ENCODE measurements at regions of chr9 and their contacts with region 1.

Region 1: GRCh38 chr9:85425153-85425611 is 316.6 kb downstream of the AGTPBP1 start:
- DNase-seq: peak; percentile 84
- H3K4me3 ChIP-seq: no peak overlapping the region
- H3K27ac ChIP-seq: no peak overlapping the region
- H3K4me1 ChIP-seq: peaks cover 26% of the 10 kb centered on the region
- H3K27me3 ChIP-seq: no peaks in the 10 kb centered on the region
- CTCF ChIP-seq: peak; percentile 74 to 78
- POLR2A ChIP-seq: no peak

Region 2: GRCh38 chr9:84773022-84773421 is 652.2 kb before region 1 on chr9:
- CTCF ChIA-PET with region 1: no interaction called
- POLR2A ChIA-PET with region 1: no interaction called
- dilution Hi-C with region 1: no loop called
- intact Hi-C with region 1: loop called (anchors 10 kb)
- DNase-seq: peak; percentile 33
- H3K4me3 ChIP-seq: no peak overlapping the region
- H3K27ac ChIP-seq: no peak overlapping the region
- H3K4me1 ChIP-seq: peaks cover 8% of the 10 kb centered on the region
- H3K27me3 ChIP-seq: no peaks in the 10 kb centered on the region
- CTCF ChIP-seq: no peak
- POLR2A ChIP-seq: no peak

Region 3: DNA sequence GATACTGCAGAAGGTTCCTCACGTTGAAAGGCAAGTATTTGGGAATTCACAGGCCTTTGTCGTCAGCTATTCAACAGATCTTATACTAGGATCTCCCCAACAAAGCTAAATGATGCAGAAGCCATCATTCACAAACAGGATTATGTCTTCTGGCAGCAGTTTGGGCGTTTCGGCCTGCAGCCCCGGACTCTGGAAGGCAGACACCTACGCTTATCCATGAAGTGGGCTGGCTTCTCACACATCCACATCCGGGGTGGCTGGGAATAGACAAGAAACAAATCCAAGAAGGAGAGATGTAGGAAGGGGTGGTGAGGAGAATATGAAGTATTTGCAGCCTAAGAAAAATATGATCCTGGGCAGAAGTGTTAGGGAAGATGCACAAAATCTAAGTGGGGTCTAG is 155.4 kb before region 1 on chr9:
- CTCF ChIA-PET with region 1: no interaction called
- POLR2A ChIA-PET with region 1: no interaction called
- dilution Hi-C with region 1: no loop called
- intact Hi-C with region 1: no loop called
- DNase-seq: no peak
- H3K4me3 ChIP-seq: no peak overlapping the region
- H3K27ac ChIP-seq: no peak overlapping the region
- H3K4me1 ChIP-seq: no peaks in the 10 kb centered on the region
- H3K27me3 ChIP-seq: peaks cover under 1 to 7% of the 10 kb centered on the region in 2 experiments
- CTCF ChIP-seq: no peak
- POLR2A ChIP-seq: no peak

Region 4: DNA sequence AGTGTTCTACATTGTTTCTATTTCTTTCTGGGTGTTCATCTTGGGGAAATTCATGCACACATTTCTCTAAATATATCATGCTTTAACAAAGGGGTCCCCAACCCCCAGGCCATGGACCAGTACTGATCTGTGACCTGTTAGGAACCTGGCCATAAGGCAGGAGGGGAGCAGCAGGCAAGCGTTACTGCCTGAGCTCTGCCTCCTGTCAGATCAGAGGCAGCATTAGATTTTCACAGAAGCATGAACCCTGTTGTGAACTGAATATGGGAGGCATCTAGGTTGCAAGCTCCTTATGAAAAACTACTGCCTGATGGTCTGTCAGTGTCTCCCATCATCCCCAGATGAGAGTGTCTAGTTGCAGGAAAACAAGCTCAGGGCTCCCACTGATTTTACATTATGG is 46.6 kb after region 1 on chr9:
- CTCF ChIA-PET with region 1: no interaction called
- POLR2A ChIA-PET with region 1: no interaction called
- dilution Hi-C with region 1: no loop called
- intact Hi-C with region 1: no loop called
- DNase-seq: no peak
- H3K4me3 ChIP-seq: no peak overlapping the region
- H3K27ac ChIP-seq: no peak overlapping the region
- H3K4me1 ChIP-seq: no peaks in the 10 kb centered on the region
- H3K27me3 ChIP-seq: no peaks in the 10 kb centered on the region
- CTCF ChIP-seq: no peak
- POLR2A ChIP-seq: no peak

Region 5: GRCh38 chr9:85527331-85528020 is 102.3 kb after region 1 on chr9:
- CTCF ChIA-PET with region 1: no interaction called
- POLR2A ChIA-PET with region 1: no interaction called
- dilution Hi-C with region 1: no loop called
- intact Hi-C with region 1: loop called (anchors 2 kb)
- DNase-seq: peak; percentile 88
- H3K4me3 ChIP-seq: no peak overlapping the region
- H3K27ac ChIP-seq: peak overlapping the region; percentile 64
- H3K4me1 ChIP-seq: peaks cover 18% of the 10 kb centered on the region
- H3K27me3 ChIP-seq: peaks cover 13 to 17% of the 10 kb centered on the region in 2 experiments
- CTCF ChIP-seq: no peak
- POLR2A ChIP-seq: no peak

Region 6: DNA sequence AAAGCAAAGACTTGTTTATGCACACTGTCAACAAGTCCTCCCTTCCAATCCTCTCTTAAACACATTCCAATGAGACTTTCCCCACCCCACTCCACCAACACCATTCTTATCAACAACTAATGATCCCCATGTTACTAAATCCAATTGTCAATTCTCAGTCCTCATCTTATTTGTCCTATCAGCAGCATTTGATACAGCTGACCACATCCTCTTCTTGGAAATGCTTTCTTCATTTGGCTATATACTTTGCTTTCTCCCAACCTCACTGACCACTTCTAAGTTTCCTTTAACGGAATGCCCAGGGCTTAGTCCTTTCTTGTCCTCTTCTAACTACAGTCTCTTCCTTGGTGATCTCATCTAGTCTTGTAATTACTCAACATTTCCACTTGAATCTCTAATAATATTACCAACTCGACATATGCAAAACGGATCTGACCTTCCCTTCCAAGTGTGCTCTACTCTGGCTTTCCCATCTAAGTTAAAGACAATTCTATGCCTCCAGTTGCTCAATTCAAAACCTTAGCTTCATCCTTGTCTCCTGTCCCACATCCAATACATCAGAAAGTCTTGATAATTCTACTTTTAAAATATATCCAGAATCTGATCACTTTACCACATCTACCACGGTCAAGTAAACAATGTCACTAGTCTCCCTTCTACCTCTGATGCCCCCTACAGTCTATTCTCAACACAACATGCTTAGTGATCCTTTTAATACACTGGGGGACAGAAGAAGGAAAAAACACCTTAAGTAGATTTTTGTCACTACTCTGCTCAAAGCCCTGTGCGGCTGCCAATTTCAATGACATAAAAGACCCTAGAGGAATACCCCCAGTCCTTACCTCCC is 291.1 kb after region 1 on chr9:
- CTCF ChIA-PET with region 1: no interaction called
- POLR2A ChIA-PET with region 1: no interaction called
- dilution Hi-C with region 1: no loop called
- intact Hi-C with region 1: no loop called
- DNase-seq: no peak
- H3K4me3 ChIP-seq: no peak overlapping the region
- H3K27ac ChIP-seq: no peak overlapping the region
- H3K4me1 ChIP-seq: no peaks in the 10 kb centered on the region
- H3K27me3 ChIP-seq: no peaks in the 10 kb centered on the region
- CTCF ChIP-seq: peak in 1 of 2 donors; percentile 3
- POLR2A ChIP-seq: no peak

Measured in endothelial cell of umbilical vein (primary cell).